ENCODE measurements at regions of chr5 and their contacts with region 1.

Region 1: DNA sequence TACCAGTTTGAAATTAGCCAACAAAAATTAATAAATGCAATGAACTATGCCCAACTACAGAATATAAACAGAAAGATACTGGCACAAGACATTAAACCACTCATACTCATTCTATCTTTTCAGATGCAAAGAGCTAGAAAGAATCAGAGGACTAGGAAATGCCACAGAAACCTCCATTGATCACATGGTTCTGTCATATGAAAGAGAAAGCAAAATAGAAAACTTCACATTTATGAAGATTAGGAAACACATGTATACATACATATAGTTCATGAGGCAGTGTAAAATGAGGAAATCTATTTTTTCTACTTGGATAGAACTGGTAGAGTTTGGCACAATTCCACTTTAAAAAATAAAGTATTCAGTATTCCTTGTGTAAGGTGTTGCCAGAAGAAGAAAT is 275.1 kb upstream of the PTGER4 start:
- DNase-seq: no peak
- H3K4me3 ChIP-seq: no peak overlapping the region
- H3K27ac ChIP-seq: no peak overlapping the region
- H3K4me1 ChIP-seq: no peaks in the 10 kb centered on the region
- H3K27me3 ChIP-seq: no peaks in the 10 kb centered on the region
- CTCF ChIP-seq: no peak
- POLR2A ChIP-seq: no peak

Region 2: DNA sequence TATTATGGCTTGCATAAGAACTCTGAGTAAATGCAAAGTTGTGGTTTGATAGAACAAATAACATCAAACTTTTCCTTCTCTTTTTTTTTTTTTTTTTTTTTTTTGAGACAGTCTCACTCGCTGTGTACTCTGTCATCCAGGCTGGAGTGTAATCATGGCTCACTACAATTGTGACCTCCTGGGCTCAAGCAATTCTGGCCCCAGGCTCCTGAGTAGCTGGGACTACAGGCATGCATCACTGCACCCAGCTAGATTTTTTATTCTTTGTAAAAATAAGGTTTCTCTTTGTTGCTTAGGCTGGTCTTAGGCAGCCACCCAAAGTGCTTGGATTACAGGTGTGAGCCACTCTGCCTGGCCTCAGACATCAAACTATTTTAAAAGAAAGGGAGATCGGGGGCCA is 256.1 kb after region 1 on chr5:
- intact Hi-C with region 1: loop called (anchors 5 kb)
- DNase-seq: no peak
- H3K4me3 ChIP-seq: no peak overlapping the region
- H3K27ac ChIP-seq: no peak overlapping the region
- H3K4me1 ChIP-seq: no peaks in the 10 kb centered on the region
- H3K27me3 ChIP-seq: no peaks in the 10 kb centered on the region
- CTCF ChIP-seq: no peak
- POLR2A ChIP-seq: no peak

Region 3: DNA sequence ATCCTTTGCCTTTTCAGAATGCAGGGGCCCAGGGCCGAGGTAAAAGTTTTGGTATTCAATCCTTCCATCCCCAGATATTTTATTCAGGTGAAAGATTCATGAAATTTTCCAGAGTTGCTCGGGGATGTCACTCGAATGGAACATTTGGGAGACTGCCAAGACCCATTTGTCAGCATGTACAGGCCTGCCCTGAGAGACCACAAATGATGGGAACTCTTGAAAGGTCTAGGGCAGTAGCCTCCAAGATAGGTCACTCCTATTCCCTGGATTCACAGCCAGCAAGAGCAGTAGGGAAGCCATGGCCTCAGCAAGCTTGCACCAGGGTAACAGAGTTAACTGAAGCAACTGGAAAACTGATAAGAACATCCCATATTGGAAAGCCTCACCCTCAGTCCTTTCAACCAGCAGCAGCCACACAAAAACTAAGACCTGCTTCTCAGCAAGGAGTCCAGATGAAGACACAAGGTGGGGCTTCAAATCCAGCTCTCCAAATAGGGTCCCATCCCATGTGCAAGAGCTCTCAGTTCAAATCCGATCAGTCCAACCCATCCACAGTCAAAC is 449.1 kb after region 1 on chr5:
- intact Hi-C with region 1: no loop called
- DNase-seq: no peak
- H3K4me3 ChIP-seq: no peak overlapping the region
- H3K27ac ChIP-seq: no peak overlapping the region
- H3K4me1 ChIP-seq: no peaks in the 10 kb centered on the region
- H3K27me3 ChIP-seq: no peaks in the 10 kb centered on the region
- CTCF ChIP-seq: no peak
- POLR2A ChIP-seq: no peak

Measured in breast epithelium (tissue), 4 donors.